Activated CD4-positive, alpha-beta memory T cell treated with anti-CD3 and anti-CD28 coated beads for 36 hours (primary cell): ENCODE measurements at regions of chr17 and their contacts with region 1.

Region 1: GRCh38 chr17:78133971-78134898 is 3.7 kb downstream of the TMC8 start:
- DNase-seq: peak; percentile 87
- H3K4me3 Mint-ChIP-seq: peak overlapping the region; percentile 65
- H3K27ac Mint-ChIP-seq: peak overlapping the region; percentile 54
- H3K4me1 Mint-ChIP-seq: peaks cover 70% of the 10 kb centered on the region
- H3K27me3 Mint-ChIP-seq: no peaks in the 10 kb centered on the region

Region 2: GRCh38 chr17:77657839-77658238 is 476.4 kb before region 1 on chr17:
- CTCF ChIA-PET with region 1: no interaction called
- POLR2A ChIA-PET with region 1: no interaction called
- intact Hi-C with region 1: no loop called
- DNase-seq: no peak
- H3K4me3 Mint-ChIP-seq: no peak overlapping the region
- H3K27ac Mint-ChIP-seq: no peak overlapping the region
- H3K4me1 Mint-ChIP-seq: no peaks in the 10 kb centered on the region
- H3K27me3 Mint-ChIP-seq: peaks cover 2% of the 10 kb centered on the region

Region 3: DNA sequence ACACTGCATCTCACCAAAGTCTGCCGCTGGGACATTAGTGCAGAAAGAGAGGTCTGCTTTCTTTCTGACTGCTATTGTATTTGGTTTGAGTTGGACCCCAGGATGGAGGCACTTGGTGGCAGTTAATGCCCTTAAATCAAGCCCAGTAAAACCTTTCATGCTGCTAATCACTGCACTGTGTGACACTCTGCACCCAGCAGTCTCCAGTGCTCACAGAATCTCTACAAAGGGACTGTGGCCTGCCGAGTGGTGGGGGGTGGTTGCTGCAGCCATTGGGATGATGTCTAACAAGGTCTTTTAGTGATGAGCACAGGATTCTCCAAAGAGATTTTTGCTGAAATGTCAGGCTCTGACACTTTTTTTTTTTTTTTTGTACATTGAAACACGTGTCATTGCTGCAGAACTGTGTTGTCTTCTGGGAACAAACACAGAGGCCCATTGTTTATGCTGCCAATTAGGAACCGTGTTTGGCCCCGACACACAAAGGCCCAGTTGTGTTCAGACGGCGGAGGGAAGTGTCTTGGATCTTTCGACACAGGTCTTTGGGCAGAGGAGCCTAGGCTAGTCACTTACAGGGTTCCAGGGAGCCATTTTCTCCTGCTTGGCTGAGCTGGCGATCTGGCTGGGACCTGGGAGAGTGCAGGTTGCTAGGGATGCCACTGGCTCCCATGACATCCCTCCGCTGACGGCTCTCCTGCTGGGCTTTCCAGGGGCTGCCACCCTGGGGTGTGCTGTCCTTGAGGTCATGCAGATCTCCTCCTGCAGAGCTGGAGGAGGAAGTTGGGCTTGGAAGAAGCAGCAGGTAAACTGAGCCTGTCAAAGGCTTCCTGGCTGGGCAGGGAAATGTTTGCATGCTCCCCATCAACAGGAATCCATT is 191.9 kb before region 1 on chr17:
- CTCF ChIA-PET with region 1: no interaction called
- POLR2A ChIA-PET with region 1: no interaction called
- intact Hi-C with region 1: no loop called
- DNase-seq: no peak
- H3K4me3 Mint-ChIP-seq: no peak overlapping the region
- H3K27ac Mint-ChIP-seq: no peak overlapping the region
- H3K4me1 Mint-ChIP-seq: no peaks in the 10 kb centered on the region
- H3K27me3 Mint-ChIP-seq: peaks cover 3% of the 10 kb centered on the region

Region 4: DNA sequence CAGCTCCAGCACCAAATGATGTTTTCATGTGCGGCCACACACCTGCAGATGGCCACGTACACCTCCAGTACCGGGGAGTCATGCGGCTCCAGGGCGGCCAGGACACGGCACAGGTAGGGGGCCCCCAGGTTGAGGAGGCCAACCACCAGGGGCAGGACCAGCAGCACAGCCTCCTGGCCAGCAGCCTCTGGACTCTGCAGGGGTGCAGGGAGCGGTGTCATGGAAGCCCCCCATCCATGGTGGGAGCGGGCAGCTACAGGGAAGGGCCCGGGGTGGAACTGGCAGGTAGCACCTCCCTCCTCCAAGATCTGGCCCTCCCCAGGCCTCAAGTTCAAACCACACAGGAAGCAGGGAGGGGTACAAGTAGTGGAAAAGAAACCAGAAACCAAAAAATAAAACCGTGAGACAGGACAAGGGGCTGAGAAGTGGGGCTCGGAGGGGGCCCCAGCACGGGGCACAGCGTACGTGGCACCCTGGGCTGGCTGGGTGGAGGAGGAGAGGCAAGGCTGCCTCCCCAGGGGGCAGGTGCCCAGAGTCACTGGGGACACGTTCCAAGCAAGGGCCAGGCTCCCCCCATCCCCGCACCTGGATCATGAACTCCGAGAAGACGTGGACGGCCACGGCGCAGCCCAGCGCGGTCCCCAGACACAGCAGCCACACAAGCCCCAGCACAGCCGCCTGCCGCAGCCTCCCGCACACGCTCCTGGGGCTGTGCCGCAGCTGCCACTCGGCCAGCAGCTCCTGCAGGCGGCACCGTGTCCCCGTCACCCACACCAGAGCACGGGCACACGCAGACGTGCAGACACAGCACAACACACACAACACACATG is 13.0 kb before region 1 on chr17:
- CTCF ChIA-PET with region 1: interaction called, 99 read pairs
- POLR2A ChIA-PET with region 1: interaction called, 7 read pairs
- intact Hi-C with region 1: loop called (anchors 1 kb)
- DNase-seq: peak; percentile 75
- H3K4me3 Mint-ChIP-seq: peak overlapping the region; percentile 72
- H3K27ac Mint-ChIP-seq: peak overlapping the region; percentile 77
- H3K4me1 Mint-ChIP-seq: peaks cover 51% of the 10 kb centered on the region
- H3K27me3 Mint-ChIP-seq: no peaks in the 10 kb centered on the region

Region 5: DNA sequence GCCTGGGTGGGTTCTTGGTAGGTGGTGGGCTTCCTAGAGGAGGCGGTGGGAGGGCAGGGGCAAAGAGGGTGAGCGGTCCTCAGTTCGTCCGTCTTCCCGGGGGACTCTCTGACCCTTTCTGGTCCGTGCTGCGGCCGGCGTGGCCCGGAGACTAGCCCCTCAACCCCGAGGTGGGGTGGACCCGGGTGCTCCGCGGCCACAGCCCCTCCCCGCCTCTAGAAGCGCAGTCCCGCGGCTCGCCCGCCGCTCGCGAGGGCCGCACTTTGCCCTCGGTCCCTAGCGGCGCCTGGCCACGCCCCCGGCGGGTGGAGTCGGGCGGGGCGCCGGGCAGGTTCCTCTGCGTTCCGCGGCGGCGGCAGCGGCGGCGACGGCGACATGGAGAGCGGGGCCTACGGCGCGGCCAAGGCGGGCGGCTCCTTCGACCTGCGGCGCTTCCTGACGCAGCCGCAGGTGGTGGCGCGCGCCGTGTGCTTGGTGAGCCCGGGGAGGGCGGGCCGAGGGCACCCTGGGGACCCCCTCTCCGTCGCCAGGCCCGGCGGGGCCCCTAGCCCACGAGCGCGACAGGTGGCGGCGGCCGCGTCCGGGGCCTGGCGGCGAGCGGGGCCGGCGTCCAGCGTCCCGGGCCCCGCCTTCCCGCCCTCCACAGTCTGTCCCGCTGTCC is 34.1 kb after region 1 on chr17 and contains the start of gene SYNGR2:
- CTCF ChIA-PET with region 1: interaction called, 3 read pairs
- POLR2A ChIA-PET with region 1: interaction called, 5 read pairs
- intact Hi-C with region 1: loop called (anchors 5 kb)
- DNase-seq: peak; percentile 89
- H3K4me3 Mint-ChIP-seq: peak within 1 kb of the TSS; percentile 72
- H3K27ac Mint-ChIP-seq: peak within 1 kb of the TSS; percentile 74
- H3K4me1 Mint-ChIP-seq: peaks cover 38% of the 10 kb centered on the region
- H3K27me3 Mint-ChIP-seq: no peaks in the 10 kb centered on the region
- total RNA-seq, gene SYNGR2: 79.2 to 87.7 TPM